ENCODE measurements at regions of chr19 and their contacts with region 1.

Region 1: DNA sequence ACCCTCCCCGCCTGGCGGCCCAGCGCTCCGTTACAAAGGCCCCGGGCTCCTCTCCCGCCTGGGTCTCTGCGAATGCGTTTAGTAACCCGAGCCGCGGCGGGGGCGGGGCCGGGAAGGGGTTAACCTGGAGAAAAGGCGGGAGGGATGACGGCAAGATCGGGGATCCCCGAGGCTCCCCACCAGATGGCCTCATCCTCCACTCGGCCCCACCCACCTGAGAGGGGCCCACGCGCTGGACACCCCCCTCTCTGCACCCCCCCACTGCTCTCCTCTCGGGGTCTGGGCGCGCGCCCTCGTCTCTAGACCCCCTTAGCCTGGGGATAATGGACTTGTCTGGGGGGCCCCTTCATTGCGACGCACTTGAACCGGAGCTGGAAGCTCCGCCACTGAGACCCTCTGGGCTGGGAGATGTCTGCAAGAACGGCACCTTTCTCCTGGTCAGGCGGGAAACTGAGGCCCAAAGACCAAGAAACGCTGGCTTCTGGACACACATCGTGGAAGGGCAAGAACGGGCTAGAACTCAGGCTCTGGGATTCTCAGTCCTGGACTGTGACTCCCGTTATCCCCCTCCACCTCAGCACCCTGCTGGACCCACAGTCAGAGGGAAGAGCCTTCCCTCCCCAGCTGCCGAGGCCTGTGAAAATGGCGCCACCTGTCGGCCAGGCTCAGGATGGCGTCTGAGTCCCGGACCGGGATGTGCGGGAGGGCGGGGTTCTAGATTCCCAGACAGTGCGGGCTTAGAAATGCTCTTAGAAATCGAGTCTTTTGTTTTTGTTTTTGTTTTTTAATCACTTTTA is 2.9 kb upstream of the LTBP4 start:
- DNase-seq: peak; percentile 96
- H3K4me3 ChIP-seq: peak overlapping the region; percentile 61
- H3K27ac ChIP-seq: peak overlapping the region; percentile 95
- H3K4me1 ChIP-seq: peaks cover 36% of the 10 kb centered on the region
- H3K27me3 ChIP-seq: no peaks in the 10 kb centered on the region
- CTCF ChIP-seq: peak; percentile 99

Region 2: GRCh38 chr19:39778763-39779162 is 819.6 kb before region 1 on chr19 and contains the start of gene LEUTX:
- CTCF ChIA-PET with region 1: no interaction called
- POLR2A ChIA-PET with region 1: no interaction called
- intact Hi-C with region 1: no loop called
- DNase-seq: no peak
- H3K4me3 ChIP-seq: no peak within 1 kb of the TSS
- H3K27ac ChIP-seq: no peak within 1 kb of the TSS
- H3K4me1 ChIP-seq: no peaks in the 10 kb centered on the region
- H3K27me3 ChIP-seq: peaks cover 51% of the 10 kb centered on the region
- CTCF ChIP-seq: no peak
- total RNA-seq, gene LEUTX: not detected in 2 replicates

Region 3: GRCh38 chr19:40465557-40466150 is 132.7 kb before region 1 on chr19 and contains the start of gene BLVRB:
- CTCF ChIA-PET with region 1: interaction called, 4 read pairs
- POLR2A ChIA-PET with region 1: no interaction called
- intact Hi-C with region 1: loop called (anchors 10 kb)
- DNase-seq: peak; percentile 99
- H3K4me3 ChIP-seq: peak within 1 kb of the TSS; percentile 73
- H3K27ac ChIP-seq: peak within 1 kb of the TSS; percentile 64
- H3K4me1 ChIP-seq: peaks cover 22% of the 10 kb centered on the region
- H3K27me3 ChIP-seq: no peaks in the 10 kb centered on the region
- CTCF ChIP-seq: no peak
- total RNA-seq, gene BLVRB: 36.1 and 48.2 TPM in 2 replicates

Region 4: DNA sequence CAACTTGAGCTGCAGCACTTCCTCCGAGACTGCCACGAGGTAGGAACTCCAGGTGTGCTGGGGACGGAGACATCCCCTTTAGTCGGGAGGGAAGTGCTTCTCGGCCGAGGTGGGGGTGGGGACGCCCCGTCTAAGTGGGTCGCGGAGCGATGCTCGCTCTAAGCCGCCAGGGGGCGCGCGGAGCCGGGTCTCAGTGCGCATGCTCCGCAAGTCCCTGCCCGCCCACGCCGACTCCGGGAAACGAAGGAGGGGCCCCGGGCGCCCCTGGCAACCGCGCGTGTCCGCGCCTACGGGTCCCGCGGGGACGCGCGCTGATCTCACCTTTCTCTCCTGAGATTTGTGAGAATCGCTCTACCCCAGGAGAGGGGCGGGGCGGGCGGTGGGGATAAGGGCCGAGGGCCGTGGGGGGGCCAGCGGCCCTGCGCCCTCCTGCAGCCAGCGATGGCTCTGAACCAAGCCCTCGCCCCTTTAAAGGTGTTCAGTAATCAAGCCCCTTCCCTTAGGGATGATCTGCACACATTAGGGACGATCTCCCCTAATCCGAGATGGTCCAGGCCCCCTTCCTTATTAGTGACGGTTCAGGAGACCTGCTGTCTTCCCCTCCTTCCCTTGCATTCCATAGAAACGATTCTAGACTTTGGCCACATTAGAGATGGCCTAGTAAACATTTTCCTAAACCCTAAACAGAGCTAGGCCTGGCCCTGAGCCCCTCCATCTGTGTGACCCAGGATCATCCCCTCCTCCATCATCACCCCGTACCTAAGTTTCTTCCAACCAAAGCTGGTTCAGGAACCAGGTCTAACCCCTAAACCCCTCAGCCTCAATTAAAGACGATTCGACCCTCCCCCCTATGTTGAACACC is 69.0 kb before region 1 on chr19:
- CTCF ChIA-PET with region 1: no interaction called
- POLR2A ChIA-PET with region 1: no interaction called
- intact Hi-C with region 1: loop called (anchors 1 kb)
- DNase-seq: peak; percentile 92
- H3K4me3 ChIP-seq: peak overlapping the region; percentile 30
- H3K27ac ChIP-seq: no peak overlapping the region
- H3K4me1 ChIP-seq: peaks cover 15% of the 10 kb centered on the region
- H3K27me3 ChIP-seq: no peaks in the 10 kb centered on the region
- CTCF ChIP-seq: peak; percentile 97

Region 5: DNA sequence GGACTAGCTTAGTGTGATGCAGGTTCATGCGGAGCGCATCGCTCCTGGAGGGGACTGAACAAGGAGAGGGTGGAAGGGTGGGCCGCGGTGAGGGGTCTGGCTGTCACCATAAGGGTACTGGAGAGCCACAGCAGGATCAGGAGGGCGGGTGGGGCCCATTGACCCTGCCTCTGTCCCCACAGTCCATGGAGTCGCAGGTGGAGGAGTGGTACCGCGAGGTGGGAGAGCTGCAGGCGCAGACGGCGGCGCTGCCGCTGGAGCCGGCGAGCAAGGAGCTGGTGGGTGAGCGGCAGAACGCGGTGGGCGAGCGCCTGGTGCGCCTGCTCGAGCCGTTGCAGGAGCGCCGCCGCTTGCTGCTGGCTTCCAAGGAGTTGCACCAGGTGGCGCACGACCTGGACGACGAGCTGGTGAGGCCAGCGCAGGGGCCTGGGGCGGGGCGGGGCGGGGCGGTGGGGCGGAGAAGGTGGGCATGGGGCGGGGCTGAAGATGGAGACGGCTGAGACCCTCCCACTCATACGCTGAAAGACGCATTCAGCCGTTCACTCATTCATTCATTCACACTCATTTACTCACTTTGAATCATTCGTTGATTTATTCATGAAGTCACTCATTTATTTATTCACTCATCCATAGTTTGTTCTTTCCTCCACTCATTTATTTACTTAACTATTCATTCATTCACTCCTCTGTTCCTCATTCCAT is 49.2 kb before region 1 on chr19:
- CTCF ChIA-PET with region 1: interaction called, 15 read pairs
- POLR2A ChIA-PET with region 1: no interaction called
- intact Hi-C with region 1: loop called (anchors 1 kb)
- DNase-seq: peak; percentile 85
- H3K4me3 ChIP-seq: peak overlapping the region; percentile 18
- H3K27ac ChIP-seq: no peak overlapping the region
- H3K4me1 ChIP-seq: peaks cover 3% of the 10 kb centered on the region
- H3K27me3 ChIP-seq: no peaks in the 10 kb centered on the region
- CTCF ChIP-seq: peak; percentile 60

Measured in A673 (cell line).